ENCODE measurements at regions of chr14 and their contacts with region 1.

Region 1: DNA sequence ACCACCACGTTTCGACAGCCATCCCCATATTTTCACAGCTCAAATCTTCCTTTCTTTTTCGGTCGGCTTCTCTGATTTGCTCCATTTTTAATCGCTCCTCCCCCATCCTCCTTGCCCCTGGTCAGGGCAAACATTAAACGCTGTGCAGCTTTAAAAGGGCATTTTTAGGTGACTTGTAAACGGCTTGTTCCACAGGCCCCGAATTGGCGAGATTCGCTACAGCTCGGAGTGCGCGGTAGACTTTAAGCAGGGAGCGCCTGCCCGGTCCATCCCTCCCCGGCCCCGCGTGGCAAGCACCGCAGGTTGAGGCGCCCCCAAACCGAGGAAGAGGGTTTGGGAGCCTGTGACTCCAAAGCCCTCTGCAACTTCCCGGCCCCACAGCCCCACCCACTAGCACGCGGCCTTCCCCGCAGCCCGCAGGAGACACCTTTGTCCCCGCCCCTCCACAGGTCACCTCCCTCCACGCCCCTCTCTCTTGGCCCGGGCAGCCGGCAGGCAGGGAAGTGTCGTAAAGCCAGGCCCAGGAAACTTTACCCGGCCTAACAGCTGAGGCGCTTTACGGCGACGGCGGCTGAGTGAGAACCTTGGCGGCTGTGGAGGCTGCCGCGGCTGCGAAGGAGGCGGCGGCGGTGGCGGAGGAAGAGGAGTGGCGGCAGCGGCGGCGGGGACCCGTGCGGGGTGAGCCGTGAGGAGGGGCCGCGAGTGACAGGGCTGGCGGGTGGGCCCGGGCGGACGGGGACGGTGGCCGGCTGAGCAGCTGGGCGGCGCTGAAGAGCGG is at the start of gene NAA30:
- DNase-seq: peak; percentile 96
- H3K4me3 Mint-ChIP-seq: peak within 1 kb of the TSS; percentile 82
- H3K27ac Mint-ChIP-seq: peak within 1 kb of the TSS; percentile 92
- H3K4me1 Mint-ChIP-seq: peaks cover 44% of the 10 kb centered on the region
- H3K27me3 Mint-ChIP-seq: no peaks in the 10 kb centered on the region
- total RNA-seq, gene NAA30: 14.4 to 16.9 TPM

Region 2: DNA sequence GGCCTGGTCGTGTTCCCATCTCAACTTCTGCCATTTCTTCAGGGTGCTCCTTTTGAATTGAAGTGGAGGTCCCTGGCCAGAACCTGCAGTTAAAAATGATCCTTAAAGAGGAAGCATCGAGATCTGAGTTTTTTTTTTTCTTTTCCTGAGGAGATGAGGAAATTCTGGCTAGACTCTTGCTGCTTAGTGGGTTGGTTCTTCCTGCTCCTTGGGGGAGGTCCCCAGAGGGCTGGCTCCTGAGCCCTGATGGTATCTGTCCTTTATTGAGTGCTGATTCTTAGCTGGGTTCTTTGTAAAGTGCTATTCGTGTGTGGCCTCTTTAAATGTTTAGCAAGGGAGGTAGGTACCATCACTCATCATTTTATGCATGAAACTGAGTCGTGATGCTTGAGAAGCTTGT is 1260.3 kb before region 1 on chr14:
- CTCF ChIA-PET with region 1: interaction called, 3 read pairs
- POLR2A ChIA-PET with region 1: no interaction called
- intact Hi-C with region 1: loop called (anchors 5 kb)
- DNase-seq: no peak
- H3K4me3 Mint-ChIP-seq: no peak overlapping the region
- H3K27ac Mint-ChIP-seq: no peak overlapping the region
- H3K4me1 Mint-ChIP-seq: peaks cover 48% of the 10 kb centered on the region
- H3K27me3 Mint-ChIP-seq: peaks cover under 1% of the 10 kb centered on the region

Region 3: DNA sequence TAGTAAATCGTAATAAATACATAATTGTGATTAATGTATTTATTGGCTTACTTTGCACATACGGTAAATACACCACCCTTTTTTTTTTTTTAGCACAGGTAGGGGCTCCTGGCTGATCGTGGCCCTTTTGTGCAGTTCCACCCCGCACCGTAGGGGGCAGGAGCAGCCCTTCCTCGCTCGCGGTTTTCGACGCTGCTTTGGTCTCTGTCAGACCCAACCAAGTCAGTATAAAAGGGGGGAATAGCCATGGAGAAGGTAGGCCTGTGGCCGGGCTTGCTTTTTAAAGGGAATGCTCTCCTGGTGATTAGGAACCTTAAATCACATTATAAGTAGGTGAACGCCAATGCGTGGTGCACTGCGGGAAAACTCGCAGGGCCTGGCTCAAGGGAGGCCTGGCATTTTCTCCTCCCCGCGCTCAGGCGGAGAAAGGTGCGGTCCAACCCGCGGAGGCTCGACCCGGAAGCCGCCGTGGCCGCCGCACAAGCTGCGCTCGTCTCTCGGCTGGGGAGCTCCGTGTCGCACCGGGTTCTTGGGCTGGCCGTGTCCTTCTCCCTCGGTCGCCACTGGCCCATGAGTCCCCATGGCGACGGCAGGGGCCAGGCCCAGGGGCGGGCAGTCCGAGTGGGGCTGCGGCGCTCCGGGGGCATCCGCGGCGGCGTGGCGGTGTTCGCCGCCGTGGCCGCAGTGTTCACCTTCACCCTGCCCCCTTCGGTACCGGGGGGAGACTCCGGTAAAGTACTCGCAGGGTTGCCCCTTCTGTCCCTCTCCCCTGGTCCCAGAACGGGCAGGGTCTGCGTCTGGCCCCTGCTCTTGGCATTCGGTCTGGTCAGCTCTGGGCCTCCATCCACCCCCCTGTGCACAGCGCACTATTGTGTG is 810.6 kb before region 1 on chr14 and contains the start of gene TMEM260:
- CTCF ChIA-PET with region 1: no interaction called
- POLR2A ChIA-PET with region 1: no interaction called
- intact Hi-C with region 1: loop called (anchors 5 kb)
- DNase-seq: peak; percentile 93
- H3K4me3 Mint-ChIP-seq: peak within 1 kb of the TSS; percentile 94
- H3K27ac Mint-ChIP-seq: peak within 1 kb of the TSS; percentile 95
- H3K4me1 Mint-ChIP-seq: peaks cover 38% of the 10 kb centered on the region
- H3K27me3 Mint-ChIP-seq: no peaks in the 10 kb centered on the region
- total RNA-seq, gene TMEM260: 11.4 to 13.2 TPM

Region 4: DNA sequence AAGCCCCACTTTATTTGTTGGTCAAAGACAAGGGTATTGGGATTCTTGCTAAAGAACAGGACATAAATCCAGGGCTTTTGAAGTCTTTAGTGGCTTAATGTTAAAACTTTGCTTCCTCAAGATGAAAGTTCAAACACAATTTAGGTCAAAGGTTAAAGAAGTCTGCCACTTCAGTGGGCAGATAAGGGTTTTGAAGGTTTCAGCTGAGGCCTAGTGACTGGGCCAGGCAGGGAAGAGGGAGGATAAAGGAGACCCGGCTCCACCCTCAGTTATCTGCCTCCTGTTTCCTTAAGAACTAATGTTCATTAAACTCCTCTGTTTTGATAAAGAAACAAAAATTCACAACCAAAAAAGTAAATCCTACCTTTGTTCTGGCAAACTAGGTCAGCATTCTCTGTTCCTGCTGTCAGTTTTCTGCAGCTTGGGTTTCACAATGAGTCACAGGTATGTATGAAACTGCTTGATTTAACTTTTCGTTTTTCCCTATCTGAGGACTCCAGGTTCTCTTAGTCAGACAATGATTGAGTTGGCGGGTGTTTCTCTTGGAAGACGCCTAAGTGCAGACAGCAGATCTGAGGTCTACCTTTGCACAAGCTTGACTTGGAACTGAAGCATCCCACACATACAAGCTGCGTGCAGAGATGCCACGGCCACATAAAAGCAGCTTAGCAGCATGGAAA is 329.8 kb before region 1 on chr14:
- CTCF ChIA-PET with region 1: no interaction called
- POLR2A ChIA-PET with region 1: no interaction called
- intact Hi-C with region 1: loop called (anchors 5 kb)
- DNase-seq: peak; percentile 61
- H3K4me3 Mint-ChIP-seq: peak overlapping the region; percentile 22
- H3K27ac Mint-ChIP-seq: peak overlapping the region; percentile 55
- H3K4me1 Mint-ChIP-seq: peaks cover 32% of the 10 kb centered on the region
- H3K27me3 Mint-ChIP-seq: peaks cover 4% of the 10 kb centered on the region

Region 5: GRCh38 chr14:57254884-57255283 is 135.3 kb before region 1 on chr14:
- CTCF ChIA-PET with region 1: no interaction called
- POLR2A ChIA-PET with region 1: no interaction called
- intact Hi-C with region 1: no loop called
- DNase-seq: no peak
- H3K4me3 Mint-ChIP-seq: no peak overlapping the region
- H3K27ac Mint-ChIP-seq: no peak overlapping the region
- H3K4me1 Mint-ChIP-seq: peaks cover 37% of the 10 kb centered on the region
- H3K27me3 Mint-ChIP-seq: no peaks in the 10 kb centered on the region

Region 6: DNA sequence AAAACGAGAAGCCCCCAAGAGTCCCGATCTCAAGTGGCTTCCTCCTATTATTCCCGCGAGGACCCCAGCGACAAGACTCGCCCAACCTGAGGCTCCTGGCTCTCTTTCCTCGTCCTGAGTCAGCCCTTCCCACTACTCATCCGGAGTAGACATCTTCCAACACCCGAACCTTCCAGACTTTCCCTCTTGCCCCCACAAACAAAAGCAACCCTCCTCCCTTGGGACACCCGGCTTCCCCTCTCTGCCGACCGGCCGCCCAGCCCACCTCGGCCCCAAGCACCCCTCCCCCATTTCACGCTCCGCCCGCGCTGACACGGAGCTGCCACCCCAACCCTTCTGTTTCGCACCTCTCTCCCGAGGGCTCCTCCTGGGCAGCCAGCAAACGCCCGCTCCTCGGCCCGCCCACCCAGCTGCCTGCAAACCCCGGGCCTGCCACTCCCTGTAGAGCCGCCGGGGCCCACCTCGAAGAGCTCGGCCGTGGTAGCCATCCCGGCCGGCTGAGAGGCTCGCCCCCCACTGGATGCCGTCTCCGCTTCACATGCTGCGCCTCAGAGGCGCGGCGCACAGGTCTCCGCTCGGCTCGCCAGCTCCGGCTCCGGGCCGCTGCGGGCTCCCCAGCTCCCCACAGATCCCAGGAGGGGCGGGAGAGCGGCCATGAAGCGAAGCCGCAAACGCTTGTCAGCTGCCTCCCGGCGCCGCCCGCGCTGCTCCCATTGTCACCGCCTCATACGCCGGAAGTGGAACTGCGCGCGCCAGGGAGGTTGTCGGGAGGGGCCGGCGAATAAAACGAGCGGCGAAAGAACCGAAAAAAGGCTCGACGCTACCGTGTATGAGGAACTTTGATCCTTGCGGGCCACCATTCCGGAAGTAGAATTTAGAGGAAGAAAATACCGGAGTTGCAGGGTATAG is 121.8 kb before region 1 on chr14 and contains the starts of genes AP5M1 and EXOC5:
- CTCF ChIA-PET with region 1: interaction called, 4 read pairs
- POLR2A ChIA-PET with region 1: interaction called, 8 read pairs
- intact Hi-C with region 1: loop called (anchors 1 kb)
- DNase-seq: peak; percentile 96
- H3K4me3 Mint-ChIP-seq: peak within 1 kb of the TSS; percentile 99
- H3K27ac Mint-ChIP-seq: peak within 1 kb of the TSS; percentile 99
- H3K4me1 Mint-ChIP-seq: peaks cover 48% of the 10 kb centered on the region
- H3K27me3 Mint-ChIP-seq: no peaks in the 10 kb centered on the region
- total RNA-seq, gene AP5M1: 27.7 to 31.1 TPM
- total RNA-seq, gene EXOC5: 82.1 to 82.6 TPM

Region 7: DNA sequence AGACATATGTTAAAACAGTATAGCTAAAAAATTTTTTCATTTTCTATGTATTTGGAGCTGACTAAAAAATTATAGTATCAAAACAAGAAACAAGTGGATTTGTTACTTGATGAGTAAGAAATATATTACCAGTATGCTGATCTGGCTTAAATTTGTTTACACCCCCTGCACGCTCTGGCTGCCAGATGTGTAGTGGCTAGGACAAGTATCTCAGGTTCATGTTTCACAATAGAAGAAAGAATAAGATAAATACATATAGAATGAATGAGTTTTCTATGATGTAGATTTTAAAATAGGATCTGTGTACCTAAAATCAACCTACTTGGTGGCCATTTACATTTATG is 13.3 kb after region 1 on chr14:
- CTCF ChIA-PET with region 1: interaction called, 5 read pairs
- POLR2A ChIA-PET with region 1: interaction called, 8 read pairs
- intact Hi-C with region 1: loop called (anchors 1 kb)
- DNase-seq: peak; percentile 27
- H3K4me3 Mint-ChIP-seq: no peak overlapping the region
- H3K27ac Mint-ChIP-seq: no peak overlapping the region
- H3K4me1 Mint-ChIP-seq: peaks cover 45% of the 10 kb centered on the region
- H3K27me3 Mint-ChIP-seq: no peaks in the 10 kb centered on the region

Region 8: DNA sequence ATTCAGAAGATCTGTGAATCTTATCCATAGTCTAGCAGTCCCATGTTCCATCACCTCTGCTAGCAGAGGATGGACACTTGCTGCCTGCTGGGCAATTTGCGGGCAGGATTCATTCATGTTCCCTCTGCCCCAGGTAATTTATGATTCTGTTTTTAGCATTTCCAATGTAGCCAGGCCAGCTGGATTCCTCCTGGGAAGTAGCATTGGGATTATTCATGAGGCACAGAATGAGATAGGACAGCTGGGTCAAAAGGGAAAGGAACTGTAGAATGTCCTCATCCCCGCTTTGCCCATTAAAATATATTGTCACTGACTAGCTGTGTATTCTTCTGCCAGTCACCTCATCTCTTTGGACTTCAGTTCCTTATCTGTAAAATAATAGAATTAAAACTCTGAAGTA is 406.9 kb after region 1 on chr14:
- CTCF ChIA-PET with region 1: no interaction called
- POLR2A ChIA-PET with region 1: no interaction called
- intact Hi-C with region 1: no loop called
- DNase-seq: no peak
- H3K4me3 Mint-ChIP-seq: no peak overlapping the region
- H3K27ac Mint-ChIP-seq: no peak overlapping the region
- H3K4me1 Mint-ChIP-seq: no peaks in the 10 kb centered on the region
- H3K27me3 Mint-ChIP-seq: no peaks in the 10 kb centered on the region

Region 9: DNA sequence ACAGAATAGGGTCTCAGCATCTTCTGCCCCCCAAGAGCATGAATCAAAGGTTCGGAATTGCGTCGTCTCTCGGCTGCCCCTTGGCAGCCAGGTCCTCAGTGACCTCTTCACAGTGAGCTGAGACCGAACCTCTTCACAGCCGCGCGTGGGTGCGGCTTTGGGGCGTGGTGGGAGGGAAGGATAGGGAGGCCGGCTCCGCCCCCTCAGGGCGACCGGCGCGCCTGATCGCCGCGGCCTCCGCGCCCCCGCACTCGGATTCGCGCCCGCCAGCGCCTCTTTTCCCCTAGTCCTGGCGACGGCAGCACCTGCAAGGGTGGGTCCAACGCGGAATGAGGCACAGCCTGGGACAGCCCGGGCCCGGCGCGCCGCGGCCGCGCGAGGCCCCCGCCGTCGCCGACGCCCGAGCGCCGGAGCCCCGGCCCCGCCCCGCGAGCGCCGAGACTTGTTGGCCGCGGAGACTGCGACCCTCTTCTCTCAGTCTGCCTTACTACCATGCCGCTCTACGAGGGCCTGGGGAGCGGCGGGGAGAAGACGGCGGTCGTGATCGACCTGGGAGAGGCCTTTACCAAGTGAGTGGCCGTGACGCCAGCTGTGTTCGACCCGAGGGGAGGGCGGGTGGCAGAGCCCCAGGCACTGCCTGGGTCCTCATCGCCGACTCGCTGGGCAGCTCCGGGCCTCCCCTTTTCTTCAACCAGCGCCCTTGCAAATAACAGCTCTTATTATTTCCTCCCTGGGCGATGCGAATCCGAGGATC is 809.7 kb after region 1 on chr14 and contains the start of gene ACTR10:
- CTCF ChIA-PET with region 1: no interaction called
- POLR2A ChIA-PET with region 1: no interaction called
- intact Hi-C with region 1: loop called (anchors 2 kb)
- DNase-seq: peak; percentile 93
- H3K4me3 Mint-ChIP-seq: peak within 1 kb of the TSS; percentile 95
- H3K27ac Mint-ChIP-seq: peak within 1 kb of the TSS; percentile 88
- H3K4me1 Mint-ChIP-seq: peaks cover 29% of the 10 kb centered on the region
- H3K27me3 Mint-ChIP-seq: no peaks in the 10 kb centered on the region
- total RNA-seq, gene ACTR10: 45.3 to 47.0 TPM